ENCODE measurements at regions of chr12 and their contacts with region 1.

Region 1: GRCh38 chr12:8860165-8860961 is 37.9 kb downstream of the A2ML1 start:
- DNase-seq: peak; percentile 46 to 63
- H3K4me3 ChIP-seq: no peak overlapping the region
- H3K27ac ChIP-seq: no peak overlapping the region
- H3K4me1 ChIP-seq: no peaks in the 10 kb centered on the region
- H3K27me3 ChIP-seq: no peaks in the 10 kb centered on the region
- CTCF ChIP-seq: peak; percentile 31 to 89 (median 73)
- EP300 ChIP-seq: no peak
- POLR2A ChIP-seq: no peak
- RAD21 ChIP-seq: peak; percentile 69 to 76

Region 2: GRCh38 chr12:8544295-8544694 is 316.1 kb before region 1 on chr12:
- CTCF ChIA-PET with region 1: interaction called, 13 read pairs
- POLR2A ChIA-PET with region 1: no interaction called
- DNase-seq: peak; percentile 71 to 87
- H3K4me3 ChIP-seq: no peak overlapping the region
- H3K27ac ChIP-seq: no peak overlapping the region
- H3K4me1 ChIP-seq: no peaks in the 10 kb centered on the region
- H3K27me3 ChIP-seq: no peaks in the 10 kb centered on the region
- CTCF ChIP-seq: peak; percentile 39 to 87 (median 79)
- EP300 ChIP-seq: no peak
- POLR2A ChIP-seq: no peak
- RAD21 ChIP-seq: peak; percentile 80 to 86

Region 3: GRCh38 chr12:8681041-8681902 is 179.1 kb before region 1 on chr12:
- CTCF ChIA-PET with region 1: interaction called, 15 read pairs
- POLR2A ChIA-PET with region 1: no interaction called
- DNase-seq: no peak
- H3K4me3 ChIP-seq: peak overlapping the region in 1 of 4 experiments; percentile 35; a peak in 2 of 8 replicates
- H3K27ac ChIP-seq: no peak overlapping the region
- H3K4me1 ChIP-seq: peaks cover 0 to 15% (median 11%) of the 10 kb centered on the region in 4 experiments; a peak in 6 of 7 replicates
- H3K27me3 ChIP-seq: no peaks in the 10 kb centered on the region
- CTCF ChIP-seq: no peak
- EP300 ChIP-seq: no peak
- POLR2A ChIP-seq: no peak
- RAD21 ChIP-seq: no peak

Region 4: GRCh38 chr12:8828540-8829518 is 31.5 kb before region 1 on chr12:
- CTCF ChIA-PET with region 1: interaction called, 43 read pairs
- POLR2A ChIA-PET with region 1: interaction called, 4 read pairs
- DNase-seq: no peak
- H3K4me3 ChIP-seq: no peak overlapping the region
- H3K27ac ChIP-seq: peak overlapping the region; percentile 36; the same call in 1 of the 2 replicates
- H3K4me1 ChIP-seq: peaks cover 3 to 14% (median 9%) of the 10 kb centered on the region in 4 experiments; a peak in 5 of 7 replicates
- H3K27me3 ChIP-seq: no peaks in the 10 kb centered on the region
- CTCF ChIP-seq: no peak
- EP300 ChIP-seq: no peak
- POLR2A ChIP-seq: no peak
- RAD21 ChIP-seq: no peak

Region 5: GRCh38 chr12:8844665-8845064 is 15.7 kb before region 1 on chr12:
- CTCF ChIA-PET with region 1: interaction called, 16 read pairs
- POLR2A ChIA-PET with region 1: interaction called, 3 read pairs
- DNase-seq: no peak
- H3K4me3 ChIP-seq: no peak overlapping the region
- H3K27ac ChIP-seq: no peak overlapping the region
- H3K4me1 ChIP-seq: no peaks in the 10 kb centered on the region; a peak in 1 of 7 replicates
- H3K27me3 ChIP-seq: no peaks in the 10 kb centered on the region
- CTCF ChIP-seq: no peak
- EP300 ChIP-seq: no peak
- POLR2A ChIP-seq: no peak
- RAD21 ChIP-seq: no peak

Region 6: DNA sequence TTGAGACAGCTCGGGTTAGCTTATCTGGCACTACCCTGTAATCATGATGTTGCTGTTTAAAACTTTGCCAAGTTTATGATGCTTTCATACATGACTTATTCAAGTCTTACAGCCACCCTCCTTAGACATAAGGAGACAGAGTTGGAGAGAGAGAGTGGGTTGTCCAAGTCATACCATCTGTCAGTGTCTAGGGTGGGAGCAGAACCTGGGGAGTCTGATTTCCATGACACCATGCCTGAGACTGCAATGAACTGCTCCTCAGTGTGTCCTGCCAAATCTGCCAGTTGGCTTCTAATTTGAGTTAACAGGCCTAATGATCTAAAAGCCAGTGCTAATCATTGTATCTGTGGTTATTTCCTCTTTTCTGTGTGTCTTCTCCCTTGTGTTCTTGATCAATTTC is 10.2 kb after region 1 on chr12:
- CTCF ChIA-PET with region 1: interaction called, 80 read pairs
- POLR2A ChIA-PET with region 1: interaction called, 5 read pairs
- DNase-seq: no peak
- H3K4me3 ChIP-seq: no peak overlapping the region
- H3K27ac ChIP-seq: no peak overlapping the region
- H3K4me1 ChIP-seq: no peaks in the 10 kb centered on the region
- H3K27me3 ChIP-seq: no peaks in the 10 kb centered on the region
- CTCF ChIP-seq: no peak
- EP300 ChIP-seq: no peak
- POLR2A ChIP-seq: no peak
- RAD21 ChIP-seq: no peak

Region 7: DNA sequence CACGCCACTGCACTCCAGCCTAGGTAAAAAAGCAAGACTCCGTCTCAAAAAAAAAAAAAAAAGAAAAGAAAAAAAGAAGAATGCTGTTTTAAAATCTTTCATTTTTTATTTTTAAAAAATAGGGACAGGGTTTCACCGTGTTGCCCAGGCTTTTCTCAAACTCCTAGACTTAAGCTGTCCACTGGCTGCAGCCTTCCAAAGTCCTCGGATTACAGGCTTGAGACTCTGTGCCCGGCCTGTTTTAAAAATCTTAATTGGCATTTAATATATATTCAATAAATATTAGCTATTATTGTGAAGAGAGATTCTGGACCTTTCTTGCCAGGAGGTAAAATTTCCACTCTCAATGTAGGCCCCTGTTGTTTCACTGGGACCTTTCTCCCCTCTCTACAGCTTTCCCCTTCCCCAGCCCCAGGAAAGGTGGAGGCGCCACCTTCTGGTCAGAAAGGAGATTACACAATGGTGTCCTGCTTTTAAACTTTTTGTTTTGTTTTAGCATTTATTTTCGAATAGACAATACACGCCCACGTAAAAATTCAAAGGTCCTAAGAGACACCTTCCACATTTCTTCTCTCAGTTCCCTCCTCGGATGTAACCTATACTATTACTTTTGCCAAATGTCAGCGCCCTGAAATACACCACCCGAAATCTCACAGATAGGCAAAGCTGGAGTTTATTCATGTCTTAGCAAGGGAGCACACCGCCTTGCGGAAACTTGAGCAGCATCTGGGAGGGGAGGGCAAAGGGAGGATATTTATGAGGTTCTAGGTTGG is 30.1 kb after region 1 on chr12:
- CTCF ChIA-PET with region 1: interaction called, 61 read pairs
- POLR2A ChIA-PET with region 1: interaction called, 3 read pairs
- DNase-seq: peak in 1 of 2 experiments; percentile 80
- H3K4me3 ChIP-seq: peak overlapping the region; percentile 21 to 58 (median 32); a peak in 6 of 8 replicates
- H3K27ac ChIP-seq: no peak overlapping the region
- H3K4me1 ChIP-seq: peaks cover 0 to 5% (median 1%) of the 10 kb centered on the region in 4 experiments; a peak in 3 of 7 replicates
- H3K27me3 ChIP-seq: no peaks in the 10 kb centered on the region
- CTCF ChIP-seq: peak; percentile 62 to 65 (median 63)
- EP300 ChIP-seq: no peak
- POLR2A ChIP-seq: no peak
- RAD21 ChIP-seq: peak; percentile 78 to 79

Region 8: DNA sequence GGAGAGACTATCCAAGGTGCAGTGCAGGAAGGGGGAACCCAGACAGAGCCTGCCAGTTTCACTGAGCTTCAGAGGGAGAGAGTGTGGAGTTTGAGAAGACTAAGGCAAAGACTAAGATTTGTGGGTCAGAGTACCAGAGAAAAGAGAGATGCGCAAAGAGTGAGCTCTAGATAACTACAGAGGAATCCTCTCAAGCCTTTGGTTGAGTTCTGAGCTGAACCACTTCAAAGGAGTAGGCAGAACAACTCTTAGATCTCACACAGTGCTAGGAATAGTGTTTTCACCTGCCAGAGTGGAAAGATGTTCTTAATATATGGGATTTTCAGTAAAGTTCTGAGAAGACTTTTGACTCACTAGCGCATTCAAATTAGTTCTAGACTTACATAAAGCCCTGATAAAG is 99.8 kb after region 1 on chr12:
- CTCF ChIA-PET with region 1: no interaction called
- POLR2A ChIA-PET with region 1: no interaction called
- DNase-seq: no peak
- H3K4me3 ChIP-seq: no peak overlapping the region
- H3K27ac ChIP-seq: no peak overlapping the region
- H3K4me1 ChIP-seq: peaks cover 0 to 3% (median 0%) of the 10 kb centered on the region in 4 experiments; a peak in 1 of 7 replicates
- H3K27me3 ChIP-seq: no peaks in the 10 kb centered on the region
- CTCF ChIP-seq: no peak
- EP300 ChIP-seq: no peak
- POLR2A ChIP-seq: no peak
- RAD21 ChIP-seq: no peak

Region 9: DNA sequence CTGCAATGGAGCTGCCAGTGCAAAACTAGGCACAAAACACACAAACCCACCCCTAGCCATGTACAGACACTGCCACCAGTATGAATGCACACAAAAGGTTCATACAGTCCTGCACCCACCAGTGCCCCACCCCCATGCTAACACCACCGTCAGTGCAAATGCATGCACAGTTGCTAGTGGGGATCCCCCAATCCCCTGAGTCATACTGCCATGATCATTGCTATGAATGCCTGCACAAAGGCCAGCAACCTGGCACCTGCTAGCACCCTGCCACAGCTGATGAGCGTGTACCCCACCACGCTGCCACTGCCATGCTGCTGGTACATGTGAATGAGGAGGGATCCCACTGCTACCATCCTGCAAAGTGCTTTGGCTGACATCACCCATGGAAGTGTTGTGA is 323.9 kb after region 1 on chr12:
- CTCF ChIA-PET with region 1: no interaction called
- POLR2A ChIA-PET with region 1: no interaction called
- DNase-seq: no peak
- H3K4me3 ChIP-seq: no peak overlapping the region
- H3K27ac ChIP-seq: no peak overlapping the region
- H3K4me1 ChIP-seq: no peaks in the 10 kb centered on the region
- H3K27me3 ChIP-seq: no peaks in the 10 kb centered on the region
- CTCF ChIP-seq: no peak
- EP300 ChIP-seq: no peak
- POLR2A ChIP-seq: no peak
- RAD21 ChIP-seq: no peak

Measured in H1 (cell line).